AG04450 (cell line): ENCODE measurements at regions of chr2 and their contacts with region 1.

Region 1: GRCh38 chr2:191566344-191566743 is 111.6 kb upstream of the NABP1 start:
- DNase-seq: peak; percentile 26
- H3K4me3 ChIP-seq: no peak overlapping the region
- H3K27ac ChIP-seq: no peak overlapping the region
- H3K27me3 ChIP-seq: no peaks in the 10 kb centered on the region
- CTCF ChIP-seq: peak; percentile 91

Region 2: DNA sequence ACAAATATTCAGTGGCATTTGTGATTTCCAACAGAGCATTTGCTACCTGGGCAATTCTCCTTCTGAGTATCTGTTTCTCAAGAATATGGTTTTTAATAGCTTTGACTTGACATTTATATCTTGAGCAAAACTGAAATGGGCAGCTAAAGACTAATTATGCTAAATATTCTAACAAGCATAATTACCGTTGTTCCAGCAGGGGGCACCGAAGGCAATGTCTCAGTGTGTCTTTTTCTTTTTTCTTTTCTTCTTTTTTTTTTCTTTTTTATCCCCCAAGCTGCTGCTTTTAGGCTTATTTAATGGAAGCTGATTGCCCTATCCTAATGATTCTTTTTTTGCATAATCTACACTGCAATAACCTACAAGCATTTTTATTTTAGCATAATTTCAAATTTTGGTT is 27.3 kb before region 1 on chr2:
- CTCF ChIA-PET with region 1: interaction called, 11 read pairs
- POLR2A ChIA-PET with region 1: no interaction called
- DNase-seq: no peak
- H3K4me3 ChIP-seq: no peak overlapping the region
- H3K27ac ChIP-seq: no peak overlapping the region
- H3K27me3 ChIP-seq: peaks cover 4% of the 10 kb centered on the region
- CTCF ChIP-seq: peak; percentile 76

Region 3: DNA sequence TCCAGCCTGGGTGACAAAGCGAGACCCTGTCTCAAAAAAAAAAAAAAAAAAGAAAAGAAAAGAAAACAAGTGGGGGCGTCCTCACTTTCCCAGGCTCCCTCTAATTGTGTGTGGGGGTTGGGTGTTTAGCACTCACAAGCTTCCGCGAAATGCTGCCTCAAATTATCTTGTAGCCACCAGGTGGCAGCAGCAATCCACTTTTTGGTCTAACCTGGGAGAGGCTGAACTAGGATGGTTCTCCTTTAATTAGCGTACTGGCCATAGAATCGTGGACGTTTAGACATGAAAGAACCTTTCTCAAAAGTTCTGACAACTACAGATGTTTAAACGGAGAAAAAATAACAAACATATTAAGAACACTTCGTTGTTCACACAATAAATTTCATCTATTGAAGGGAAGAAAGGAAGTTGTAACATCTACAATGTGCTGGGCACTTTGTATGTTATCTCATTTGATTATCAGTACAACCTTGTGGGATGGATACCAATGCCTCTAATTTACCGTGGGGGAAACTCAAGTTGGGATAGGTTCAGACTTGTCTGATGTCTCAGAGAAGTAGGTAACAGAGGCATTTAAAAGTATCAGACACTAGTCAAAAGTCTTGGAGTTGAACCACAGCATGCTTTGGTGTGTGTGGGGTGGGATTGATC is 11.1 kb before region 1 on chr2:
- CTCF ChIA-PET with region 1: interaction called, 18 read pairs
- POLR2A ChIA-PET with region 1: no interaction called
- DNase-seq: peak; percentile 61
- H3K4me3 ChIP-seq: no peak overlapping the region
- H3K27ac ChIP-seq: no peak overlapping the region
- H3K27me3 ChIP-seq: peaks cover 3% of the 10 kb centered on the region
- CTCF ChIP-seq: peak; percentile 76

Region 4: GRCh38 chr2:191649519-191649918 is 83.2 kb after region 1 on chr2:
- CTCF ChIA-PET with region 1: interaction called, 10 read pairs
- POLR2A ChIA-PET with region 1: no interaction called
- DNase-seq: no peak
- H3K4me3 ChIP-seq: no peak overlapping the region
- H3K27ac ChIP-seq: no peak overlapping the region
- H3K27me3 ChIP-seq: no peaks in the 10 kb centered on the region
- CTCF ChIP-seq: no peak

Region 5: DNA sequence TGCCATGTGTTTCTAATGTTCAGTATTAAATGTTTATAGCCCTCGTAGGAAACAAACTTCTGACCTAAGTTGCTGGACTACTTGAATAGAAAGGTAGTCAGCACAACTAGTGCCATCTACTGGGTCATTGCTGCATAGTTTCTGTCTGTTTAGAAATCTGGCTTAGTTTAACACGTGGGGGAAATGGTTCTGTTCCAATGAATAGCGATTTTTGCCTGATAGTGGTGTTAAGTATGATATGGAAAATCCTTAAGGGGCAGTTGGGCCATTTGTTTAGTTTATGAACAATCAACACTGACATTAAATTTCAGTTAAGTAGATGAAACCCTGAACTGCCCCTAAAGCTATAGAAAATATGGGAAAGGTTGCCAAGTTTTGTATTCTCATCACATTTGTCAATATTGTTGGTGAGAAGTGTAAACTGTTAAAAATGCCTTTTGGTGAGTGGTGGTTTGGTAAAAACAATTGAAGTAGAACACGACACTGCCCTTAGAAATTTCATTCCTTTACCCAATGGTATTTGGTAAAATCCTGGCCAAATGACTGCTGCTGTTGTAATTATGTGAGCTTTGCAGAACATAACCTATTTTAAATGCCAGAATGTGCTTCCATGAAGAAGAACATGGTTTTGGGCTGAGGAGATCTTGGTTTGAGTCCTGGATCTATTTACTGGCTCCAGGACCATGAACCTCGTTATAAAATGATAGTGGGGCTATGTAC is 124.8 kb after region 1 on chr2:
- CTCF ChIA-PET with region 1: interaction called, 38 read pairs
- POLR2A ChIA-PET with region 1: interaction called, 4 read pairs
- DNase-seq: peak; percentile 49
- H3K4me3 ChIP-seq: no peak overlapping the region
- H3K27ac ChIP-seq: no peak overlapping the region
- H3K27me3 ChIP-seq: no peaks in the 10 kb centered on the region
- CTCF ChIP-seq: peak; percentile 82

Region 6: GRCh38 chr2:191701696-191702095 is 135.4 kb after region 1 on chr2:
- CTCF ChIA-PET with region 1: interaction called, 38 read pairs
- POLR2A ChIA-PET with region 1: interaction called, 5 read pairs
- DNase-seq: no peak
- H3K4me3 ChIP-seq: no peak overlapping the region
- H3K27ac ChIP-seq: no peak overlapping the region
- H3K27me3 ChIP-seq: no peaks in the 10 kb centered on the region
- CTCF ChIP-seq: no peak

Region 7: GRCh38 chr2:191706791-191707190 is 140.4 kb after region 1 on chr2:
- CTCF ChIA-PET with region 1: interaction called, 26 read pairs
- POLR2A ChIA-PET with region 1: interaction called, 5 read pairs
- DNase-seq: no peak
- H3K4me3 ChIP-seq: no peak overlapping the region
- H3K27ac ChIP-seq: no peak overlapping the region
- H3K27me3 ChIP-seq: no peaks in the 10 kb centered on the region
- CTCF ChIP-seq: no peak